Right lobe of liver (tissue), 6 donors: ENCODE measurements at regions of chr17 and their contacts with region 1.

Region 1: DNA sequence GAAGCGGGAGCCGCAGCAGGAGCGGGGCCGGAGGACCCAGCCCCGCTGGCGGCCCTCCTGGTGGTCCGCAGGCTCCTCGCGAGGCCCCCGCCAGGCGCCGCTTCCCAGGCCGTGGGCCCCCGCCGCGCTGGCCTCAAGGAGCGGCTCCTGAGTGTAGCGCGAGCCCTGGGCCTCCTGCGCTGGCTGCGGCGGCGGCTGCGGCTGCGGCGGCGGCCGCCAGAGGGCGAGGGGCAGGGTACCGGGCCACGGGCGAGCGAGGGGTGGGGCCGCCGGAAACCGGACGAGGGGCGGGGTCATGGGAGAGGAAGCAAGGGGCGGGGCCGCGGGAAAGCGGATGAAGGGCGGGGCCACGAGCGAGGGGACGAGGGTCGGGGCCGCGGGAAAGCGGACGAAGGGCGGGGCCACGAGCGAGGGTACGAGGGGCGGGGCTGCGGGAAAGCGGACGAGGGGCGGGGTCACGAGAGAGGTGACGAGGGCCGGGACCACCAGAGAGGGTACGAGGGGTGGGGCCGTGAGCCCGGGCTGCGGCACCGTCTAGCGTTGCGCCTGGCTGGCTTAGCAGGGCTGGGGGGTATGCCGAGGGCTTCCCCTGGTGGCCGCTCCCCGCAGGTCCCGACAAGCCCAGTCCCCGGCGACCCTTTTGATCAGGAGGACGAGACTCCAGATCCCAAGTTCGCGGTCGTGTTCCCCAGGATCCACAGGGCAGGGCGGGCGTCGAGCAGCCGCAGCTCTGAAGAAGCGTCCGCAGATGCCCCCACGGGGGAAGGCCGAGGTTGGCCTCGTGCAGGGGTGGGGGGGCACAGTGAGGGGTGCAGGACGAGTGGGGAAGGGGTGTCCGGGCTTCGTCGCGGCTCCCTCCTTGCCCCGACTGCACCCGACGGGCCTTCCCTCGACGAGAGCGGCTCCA is 1.7 kb downstream of the MYO15B start:
- DNase-seq: peak; percentile 96 to 98 (median 98)
- ATAC-seq: peak; percentile 92 to 94 (median 92)
- H3K4me3 ChIP-seq: peak overlapping the region; percentile 62 to 67 (median 64)
- H3K27ac ChIP-seq: peak overlapping the region; percentile 82 to 91 (median 87)
- H3K4me1 ChIP-seq: peaks cover 0 to 5% (median 0%) of the 10 kb centered on the region in 4 donors
- H3K27me3 ChIP-seq: no peaks in the 10 kb centered on the region
- CTCF ChIP-seq: peak; percentile 44 to 81 (median 60)
- POLR2A ChIP-seq: peak; percentile 76

Region 2: GRCh38 chr17:75487351-75488070 is 101.8 kb before region 1 on chr17:
- intact Hi-C with region 1: no loop called
- DNase-seq: peak in 2 of 3 donors; percentile 49 to 62
- ATAC-seq: peak; percentile 36 to 67 (median 44)
- H3K4me3 ChIP-seq: no peak overlapping the region
- H3K27ac ChIP-seq: peak overlapping the region in 2 of 3 donors; percentile 20 to 33
- H3K4me1 ChIP-seq: peaks cover 0 to 7% (median 0%) of the 10 kb centered on the region in 4 donors
- H3K27me3 ChIP-seq: no peaks in the 10 kb centered on the region
- CTCF ChIP-seq: no peak
- POLR2A ChIP-seq: no peak

Region 3: DNA sequence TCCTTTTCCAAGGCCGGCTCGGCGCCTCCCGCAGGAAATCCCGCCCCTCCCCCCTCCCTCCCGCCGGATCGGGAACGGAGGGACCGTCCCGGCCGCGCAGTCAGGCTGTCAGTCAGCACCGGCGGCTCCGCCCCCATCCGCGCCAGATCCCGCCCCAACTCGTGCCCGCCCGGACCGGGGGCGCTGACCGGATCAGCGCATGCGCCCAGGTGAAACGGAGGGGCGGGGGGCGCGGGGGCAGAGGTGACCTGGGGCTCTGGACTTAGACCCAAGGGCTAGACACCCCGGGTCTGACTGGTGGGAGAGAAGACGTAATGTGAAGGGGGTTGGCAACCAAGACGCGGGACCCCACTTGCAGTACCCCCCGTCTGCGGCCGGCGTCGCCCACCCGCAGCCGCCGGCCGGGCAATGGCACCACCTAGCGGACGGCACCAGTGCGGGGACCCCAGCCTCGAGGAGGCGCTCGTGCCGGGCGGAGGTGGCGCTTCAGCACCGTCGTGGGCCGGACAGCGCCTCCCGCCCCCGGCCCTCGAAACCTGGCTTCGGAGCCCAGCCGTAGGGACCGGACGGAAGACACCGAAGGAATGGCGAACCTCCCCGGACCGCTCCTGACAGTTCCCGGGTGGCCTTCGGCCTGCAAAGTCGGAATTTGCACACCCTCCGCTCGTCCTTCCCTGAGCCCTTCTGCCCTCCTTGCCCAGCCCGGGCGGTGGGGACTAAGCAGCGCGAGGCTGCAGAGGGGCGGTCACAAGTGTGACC is 73.6 kb before region 1 on chr17 and contains the start of gene CASKIN2:
- intact Hi-C with region 1: loop called in 1 of 2 experiments (anchors 5 kb)
- DNase-seq: peak; percentile 97 to 98 (median 98)
- ATAC-seq: peak; percentile 74 to 89 (median 83)
- H3K4me3 ChIP-seq: peak within 1 kb of the TSS; percentile 87 to 93 (median 91)
- H3K27ac ChIP-seq: peak within 1 kb of the TSS; percentile 62 to 73 (median 62)
- H3K4me1 ChIP-seq: peaks cover 0 to 28% (median 9%) of the 10 kb centered on the region in 4 donors
- H3K27me3 ChIP-seq: no peaks in the 10 kb centered on the region
- CTCF ChIP-seq: peak; percentile 93 to 98 (median 94)
- POLR2A ChIP-seq: no peak
- total RNA-seq, gene CASKIN2: 9.0 to 26.0 (median 12.0) TPM